ENCODE measurements at regions of chr14 and their contacts with region 1.

Region 1: DNA sequence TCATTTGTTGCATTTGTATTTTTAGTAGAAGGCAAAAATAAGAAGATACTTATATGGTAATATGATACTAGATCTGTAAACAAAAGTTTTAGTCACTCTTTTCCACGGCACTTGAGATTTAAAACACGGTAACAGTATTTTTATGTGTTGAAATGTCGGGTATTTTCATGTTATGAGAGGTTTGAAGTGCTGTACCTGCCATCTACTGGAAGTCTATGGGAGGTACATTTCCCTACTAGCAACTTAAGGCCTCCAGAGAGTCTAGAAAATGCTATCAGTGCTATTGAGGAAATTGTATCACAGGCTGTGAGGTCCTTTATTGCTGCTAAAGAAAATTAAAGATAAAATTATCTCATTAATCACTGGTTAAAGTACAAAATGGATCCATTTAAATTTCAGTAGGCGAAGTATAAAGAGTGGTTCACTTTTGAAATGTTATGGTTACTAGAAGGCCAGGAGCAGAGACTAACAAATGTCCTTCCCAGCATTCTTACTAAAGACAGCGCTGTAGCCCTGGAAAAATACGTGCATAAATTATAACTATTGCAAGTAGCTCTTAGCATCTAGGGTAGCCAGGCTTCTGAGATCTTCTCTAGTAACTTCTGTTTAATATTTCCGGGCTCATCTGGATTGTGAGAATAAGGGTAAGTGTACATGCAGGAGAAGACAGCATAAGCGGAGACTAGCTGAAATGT is 77.6 kb upstream of the PRKD1 start:
- H3K4me3 ChIP-seq: no peak overlapping the region
- H3K27ac ChIP-seq: no peak overlapping the region
- H3K4me1 ChIP-seq: peaks cover 9% of the 10 kb centered on the region; the same call in 1 of the 2 replicates
- CTCF ChIP-seq: peak; percentile 33; the same call in 1 of the 2 replicates

Region 2: GRCh38 chr14:29548948-29549370 is 456.3 kb before region 1 on chr14:
- CTCF ChIA-PET with region 1: interaction called, 24 read pairs
- POLR2A ChIA-PET with region 1: no interaction called
- H3K4me3 ChIP-seq: no peak overlapping the region
- H3K27ac ChIP-seq: no peak overlapping the region
- H3K4me1 ChIP-seq: no peaks in the 10 kb centered on the region
- CTCF ChIP-seq: no peak

Measured in HEK293 (cell line).